Activated CD8-positive, alpha-beta T cell treated with anti-CD3 and anti-CD28 coated beads for 36 hours (primary cell): ENCODE measurements at regions of chr3 and their contacts with region 1.

Region 1: GRCh38 chr3:196711838-196712513 is at the starts of genes CEP19 and PIGX:
- DNase-seq: peak; percentile 96
- ATAC-seq: peak; percentile 84
- H3K4me3 Mint-ChIP-seq: peak within 1 kb of the TSS; percentile 81
- H3K27ac Mint-ChIP-seq: peak within 1 kb of the TSS; percentile 93
- H3K4me1 Mint-ChIP-seq: peaks cover 36% of the 10 kb centered on the region
- H3K27me3 Mint-ChIP-seq: no peaks in the 10 kb centered on the region
- CTCF ChIP-seq: no peak
- total RNA-seq, gene CEP19: 5.2 to 5.5 TPM
- total RNA-seq, gene PIGX: 43.7 to 47.1 TPM

Region 2: DNA sequence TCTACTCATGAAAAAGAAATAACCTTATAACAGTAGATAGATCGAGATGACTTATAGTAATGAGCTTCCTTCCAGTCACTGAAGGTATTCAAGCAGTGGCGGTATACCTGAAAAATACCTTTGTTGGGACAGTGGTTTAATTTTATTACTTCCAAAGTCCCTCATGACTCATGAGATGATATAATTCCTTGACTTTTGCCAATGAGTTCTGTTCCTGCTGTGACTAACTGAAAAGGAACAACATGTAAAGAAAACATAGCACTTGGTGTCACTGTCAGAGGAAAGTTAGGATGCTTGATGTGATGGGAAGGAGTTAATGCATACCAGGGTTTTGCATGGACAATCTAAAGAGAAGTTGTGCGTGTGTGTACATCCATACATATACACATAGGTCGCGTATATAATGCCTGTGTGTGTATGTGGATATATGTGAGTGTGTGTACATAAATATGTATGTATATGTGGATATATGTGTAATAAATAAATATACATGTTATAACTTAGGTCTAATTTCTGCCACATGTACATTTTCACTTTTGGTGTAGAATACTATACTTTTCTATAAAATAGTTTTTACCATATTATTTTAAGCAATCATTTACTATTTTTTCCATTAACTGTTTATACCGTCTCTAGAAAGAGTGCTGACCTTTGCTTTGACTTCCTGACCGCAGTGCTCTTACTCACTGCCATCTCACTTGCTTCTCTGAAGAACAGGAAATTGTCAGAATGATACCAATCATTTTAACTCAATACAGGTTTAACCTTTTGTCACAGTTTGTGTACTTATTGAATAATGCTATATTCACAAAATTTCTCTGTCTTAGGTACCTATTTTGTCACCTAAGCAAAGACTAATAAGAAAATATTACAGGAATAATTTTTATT is 15.1 kb after region 1 on chr3:
- CTCF ChIA-PET with region 1: no interaction called
- POLR2A ChIA-PET with region 1: interaction called, 10 read pairs
- intact Hi-C with region 1: no loop called
- DNase-seq: peak; percentile 63
- ATAC-seq: peak; percentile 98
- H3K4me3 Mint-ChIP-seq: no peak overlapping the region
- H3K27ac Mint-ChIP-seq: peak overlapping the region; percentile 89
- H3K4me1 Mint-ChIP-seq: peaks cover 20% of the 10 kb centered on the region
- H3K27me3 Mint-ChIP-seq: no peaks in the 10 kb centered on the region
- CTCF ChIP-seq: no peak

Region 3: DNA sequence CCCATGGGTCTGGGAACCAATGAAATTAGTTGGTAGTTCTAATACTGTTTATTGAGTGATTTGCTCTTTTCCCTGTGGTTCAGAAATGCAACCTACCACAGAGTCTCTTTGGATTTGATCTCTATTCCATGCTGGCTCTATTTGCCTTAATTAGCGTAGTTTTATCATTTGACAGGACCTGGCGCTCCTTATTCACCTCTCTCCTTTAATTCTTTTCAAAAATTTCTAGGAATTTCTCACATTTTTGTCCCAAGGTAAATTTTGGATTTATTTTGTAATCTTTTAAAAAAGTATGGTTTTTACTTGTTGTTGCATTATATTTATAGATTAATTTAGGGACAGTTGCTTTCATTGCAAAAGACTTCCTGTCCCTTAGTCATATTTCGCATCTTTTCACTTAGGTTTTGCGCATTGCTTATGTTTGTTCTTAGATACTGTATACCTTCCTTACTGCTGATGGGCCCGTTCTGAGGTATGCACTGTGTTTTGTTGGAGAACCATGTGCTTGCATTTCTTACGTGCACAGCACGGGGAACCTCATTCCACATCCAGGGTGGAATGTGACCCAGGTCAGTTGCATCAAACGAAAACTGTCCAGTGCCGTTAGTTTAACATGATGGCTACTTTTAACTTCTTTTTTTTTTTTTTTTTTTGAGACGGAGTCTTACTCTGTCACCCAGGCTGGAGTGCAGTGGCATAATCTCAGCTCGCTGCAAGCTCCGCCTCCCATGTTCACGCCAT is 182.8 kb after region 1 on chr3:
- CTCF ChIA-PET with region 1: no interaction called
- POLR2A ChIA-PET with region 1: no interaction called
- intact Hi-C with region 1: no loop called
- DNase-seq: no peak
- ATAC-seq: no peak
- H3K4me3 Mint-ChIP-seq: no peak overlapping the region
- H3K27ac Mint-ChIP-seq: no peak overlapping the region
- H3K4me1 Mint-ChIP-seq: peaks cover 11% of the 10 kb centered on the region
- H3K27me3 Mint-ChIP-seq: no peaks in the 10 kb centered on the region
- CTCF ChIP-seq: no peak